ENCODE measurements at regions of chr11 and their contacts with region 1.

Region 1: GRCh38 chr11:36583667-36584066 is 10.6 kb upstream of the IFTAP start:
- DNase-seq: no peak
- ATAC-seq: no peak
- H3K4me3 Mint-ChIP-seq: no peak overlapping the region
- H3K27ac Mint-ChIP-seq: no peak overlapping the region
- H3K4me1 Mint-ChIP-seq: no peaks in the 10 kb centered on the region
- H3K27me3 Mint-ChIP-seq: peaks cover 6% of the 10 kb centered on the region

Region 2: GRCh38 chr11:36631774-36632173 is 48.1 kb after region 1 on chr11:
- CTCF ChIA-PET with region 1: no interaction called
- POLR2A ChIA-PET with region 1: no interaction called
- intact Hi-C with region 1: loop called in 1 of 2 experiments (anchors 5 kb)
- DNase-seq: peak; percentile 32
- ATAC-seq: peak; percentile 66
- H3K4me3 Mint-ChIP-seq: no peak overlapping the region
- H3K27ac Mint-ChIP-seq: no peak overlapping the region
- H3K4me1 Mint-ChIP-seq: peaks cover 8% of the 10 kb centered on the region
- H3K27me3 Mint-ChIP-seq: no peaks in the 10 kb centered on the region